Testis (tissue), 5 donors: ENCODE measurements at regions of chr1 and their contacts with region 1.

Region 1: GRCh38 chr1:23979878-23980724 is at the start of gene SRSF10:
- DNase-seq: peak; percentile 98
- H3K4me3 ChIP-seq: peak within 1 kb of the TSS; percentile 85 to 100
- H3K27ac ChIP-seq: peak within 1 kb of the TSS; percentile 94 to 100
- H3K4me1 ChIP-seq: peaks cover 43% of the 10 kb centered on the region
- H3K27me3 ChIP-seq: no peaks in the 10 kb centered on the region
- CTCF ChIP-seq: peak in 2 of 3 experiments; percentile 36 to 57
- POLR2A ChIP-seq: peak; percentile 92
- total RNA-seq, gene SRSF10: 124 to 141 TPM

Region 2: DNA sequence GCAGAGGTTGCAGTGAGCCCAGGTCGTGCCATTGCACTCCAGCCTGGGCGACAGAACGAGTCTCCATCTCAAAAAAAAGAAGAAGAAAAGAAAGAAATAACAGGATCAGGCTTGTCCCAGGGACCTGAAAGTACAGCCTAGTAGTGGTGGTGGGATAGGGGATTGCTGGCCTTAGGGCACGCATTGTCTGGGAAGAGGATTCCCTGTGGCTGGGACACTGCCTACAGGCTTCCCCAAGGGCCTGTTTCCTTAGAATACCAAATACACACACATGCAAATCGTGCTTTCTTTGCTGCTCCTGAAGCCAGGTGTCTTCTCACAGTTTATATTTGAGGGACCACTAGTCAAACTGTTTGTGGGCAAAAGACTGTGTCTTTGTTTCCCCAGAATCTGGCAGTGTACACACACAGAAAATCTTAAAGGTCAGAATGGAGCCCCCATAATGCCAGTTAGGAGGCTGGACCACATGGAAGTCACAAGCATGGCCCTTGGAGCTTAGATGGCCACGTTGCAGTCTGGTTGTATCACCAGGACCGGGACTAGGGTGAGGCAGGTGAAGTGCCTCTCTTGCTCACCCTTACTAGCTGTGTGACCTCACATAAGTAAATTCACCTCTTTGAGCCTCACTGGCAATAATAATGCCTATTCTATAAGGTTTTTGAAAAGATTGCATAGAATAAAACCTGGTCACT is 483.5 kb before region 1 on chr1:
- intact Hi-C with region 1: no loop called
- DNase-seq: no peak
- H3K4me3 ChIP-seq: no peak overlapping the region
- H3K27ac ChIP-seq: no peak overlapping the region
- H3K4me1 ChIP-seq: no peaks in the 10 kb centered on the region
- H3K27me3 ChIP-seq: no peaks in the 10 kb centered on the region
- CTCF ChIP-seq: no peak
- POLR2A ChIP-seq: no peak

Region 3: DNA sequence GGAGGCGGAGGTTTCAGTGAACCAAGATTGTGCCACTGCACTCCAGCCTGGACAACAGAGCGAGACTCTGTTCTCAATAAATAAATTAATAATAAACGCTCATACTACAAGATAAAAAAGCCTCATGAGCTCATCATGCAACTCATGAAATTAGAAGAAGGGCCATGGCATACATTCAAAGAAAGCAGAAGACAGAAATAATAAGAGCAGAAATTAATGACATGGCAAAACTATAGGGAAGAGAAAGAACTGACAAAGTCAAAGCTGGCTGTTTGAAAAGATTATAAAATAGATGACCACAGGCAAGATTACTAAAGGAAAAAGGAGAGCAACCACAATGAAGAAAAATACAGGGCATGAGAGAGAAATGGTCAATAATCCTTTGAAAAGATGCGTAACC is 97.4 kb before region 1 on chr1:
- intact Hi-C with region 1: no loop called
- DNase-seq: no peak
- H3K4me3 ChIP-seq: no peak overlapping the region
- H3K27ac ChIP-seq: no peak overlapping the region
- H3K4me1 ChIP-seq: no peaks in the 10 kb centered on the region
- H3K27me3 ChIP-seq: no peaks in the 10 kb centered on the region
- CTCF ChIP-seq: no peak
- POLR2A ChIP-seq: no peak

Region 4: DNA sequence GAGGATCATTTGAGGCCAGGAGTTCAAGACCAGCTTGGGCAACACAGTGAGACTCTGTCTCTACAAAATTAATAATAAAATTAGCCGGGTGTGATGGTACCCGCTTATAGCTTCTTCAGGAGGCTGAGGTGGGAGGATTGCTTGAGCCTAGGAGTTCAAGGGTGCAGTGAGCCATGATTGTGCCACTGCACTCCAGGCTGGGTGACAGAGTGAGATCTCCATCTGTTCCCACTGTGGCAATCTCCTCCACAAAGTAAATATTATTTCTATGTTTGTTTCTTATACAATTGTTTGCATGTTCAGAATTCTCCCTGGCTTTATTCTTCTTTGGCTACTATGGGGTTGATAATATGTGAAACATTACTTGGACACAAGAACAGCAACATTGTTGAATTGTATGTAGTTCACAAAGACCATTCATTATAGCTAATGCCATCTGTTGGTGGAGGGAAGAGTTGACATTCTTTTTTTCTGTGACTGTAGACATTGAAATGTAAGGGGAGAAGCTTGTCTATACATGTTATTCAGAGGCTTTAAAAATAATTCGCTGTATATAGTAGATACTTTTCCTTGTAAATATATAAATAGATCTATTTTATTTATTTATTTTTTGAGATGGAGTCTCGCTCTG is 47.9 kb after region 1 on chr1:
- intact Hi-C with region 1: loop called (anchors 10 kb)
- DNase-seq: no peak
- H3K4me3 ChIP-seq: no peak overlapping the region
- H3K27ac ChIP-seq: peak overlapping the region in 1 of 2 donors; percentile 5
- H3K4me1 ChIP-seq: peaks cover 7% of the 10 kb centered on the region
- H3K27me3 ChIP-seq: no peaks in the 10 kb centered on the region
- CTCF ChIP-seq: peak in 2 of 3 experiments; percentile 37 to 50
- POLR2A ChIP-seq: no peak

Region 5: GRCh38 chr1:24102961-24103360 is 122.9 kb after region 1 on chr1:
- intact Hi-C with region 1: no loop called
- DNase-seq: peak; percentile 68
- H3K4me3 ChIP-seq: no peak overlapping the region
- H3K27ac ChIP-seq: peak overlapping the region in 1 of 2 donors; percentile 31
- H3K4me1 ChIP-seq: peaks cover 34% of the 10 kb centered on the region
- H3K27me3 ChIP-seq: no peaks in the 10 kb centered on the region
- CTCF ChIP-seq: no peak
- POLR2A ChIP-seq: no peak

Region 6: DNA sequence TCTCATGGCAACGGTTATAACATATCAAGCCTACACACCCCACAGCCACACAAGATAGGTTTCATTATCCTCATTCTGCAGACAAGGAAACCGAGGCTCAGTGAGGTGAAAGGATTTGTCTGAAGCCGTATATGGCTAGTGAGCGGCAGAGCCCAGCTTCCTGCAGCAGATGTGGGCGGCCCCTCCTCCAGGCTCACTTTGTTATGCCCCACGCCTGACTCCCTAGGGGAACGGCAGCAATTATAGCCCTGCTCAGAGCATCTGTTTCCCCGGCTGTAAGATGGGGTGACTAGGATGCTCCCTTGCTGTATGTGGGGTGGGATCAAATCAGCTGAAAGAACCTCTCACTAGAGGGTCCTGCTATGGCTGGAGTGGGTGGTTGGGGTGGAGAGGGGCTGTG is 361.2 kb after region 1 on chr1:
- intact Hi-C with region 1: no loop called
- DNase-seq: no peak
- H3K4me3 ChIP-seq: no peak overlapping the region
- H3K27ac ChIP-seq: no peak overlapping the region
- H3K4me1 ChIP-seq: no peaks in the 10 kb centered on the region
- H3K27me3 ChIP-seq: no peaks in the 10 kb centered on the region
- CTCF ChIP-seq: no peak
- POLR2A ChIP-seq: no peak